MCF 10A (cell line): ENCODE measurements at regions of chr16 and their contacts with region 1.

Region 1: DNA sequence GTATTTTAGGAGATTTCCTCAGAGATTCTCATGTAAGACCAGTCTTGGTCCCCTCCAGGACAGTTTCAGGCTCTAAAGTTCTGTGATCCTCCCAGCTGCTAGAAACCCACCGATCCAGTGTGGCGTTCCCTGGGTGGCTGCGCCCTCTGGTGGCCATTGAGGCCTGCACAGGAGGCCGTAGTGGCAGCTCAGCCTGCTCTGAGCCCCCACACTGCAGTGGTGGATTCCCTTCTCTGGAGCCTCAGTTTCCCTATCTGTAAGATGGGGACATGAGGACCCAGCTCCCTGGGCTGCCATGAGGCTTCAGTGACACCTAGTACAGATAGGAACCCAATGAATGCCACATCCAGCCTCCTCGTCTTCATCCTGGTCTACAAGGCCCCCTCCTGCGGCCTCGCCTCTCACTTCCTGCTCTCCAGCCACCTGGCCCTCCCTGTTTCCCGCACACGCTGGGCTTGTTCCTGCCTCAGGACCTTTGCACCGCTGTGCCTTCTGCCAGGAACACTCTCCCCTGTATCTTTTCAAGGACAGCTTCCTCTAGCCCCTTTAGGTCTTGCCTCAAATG is 16.5 kb downstream of the CCDC102A start:
- DNase-seq: peak; percentile 67
- H3K4me3 Mint-ChIP-seq: no peak overlapping the region
- H3K27ac Mint-ChIP-seq: no peak overlapping the region
- H3K4me1 Mint-ChIP-seq: no peaks in the 10 kb centered on the region
- H3K27me3 Mint-ChIP-seq: no peaks in the 10 kb centered on the region
- CTCF ChIP-seq: peak; percentile 92

Region 2: GRCh38 chr16:57422026-57422944 is 97.6 kb before region 1 on chr16:
- CTCF ChIA-PET with region 1: interaction called, 129 read pairs
- POLR2A ChIA-PET with region 1: no interaction called
- intact Hi-C with region 1: loop called (anchors 1 kb)
- DNase-seq: peak; percentile 69
- H3K4me3 Mint-ChIP-seq: no peak overlapping the region
- H3K27ac Mint-ChIP-seq: no peak overlapping the region
- H3K4me1 Mint-ChIP-seq: peaks cover 21% of the 10 kb centered on the region
- H3K27me3 Mint-ChIP-seq: no peaks in the 10 kb centered on the region
- CTCF ChIP-seq: peak; percentile 51

Region 3: DNA sequence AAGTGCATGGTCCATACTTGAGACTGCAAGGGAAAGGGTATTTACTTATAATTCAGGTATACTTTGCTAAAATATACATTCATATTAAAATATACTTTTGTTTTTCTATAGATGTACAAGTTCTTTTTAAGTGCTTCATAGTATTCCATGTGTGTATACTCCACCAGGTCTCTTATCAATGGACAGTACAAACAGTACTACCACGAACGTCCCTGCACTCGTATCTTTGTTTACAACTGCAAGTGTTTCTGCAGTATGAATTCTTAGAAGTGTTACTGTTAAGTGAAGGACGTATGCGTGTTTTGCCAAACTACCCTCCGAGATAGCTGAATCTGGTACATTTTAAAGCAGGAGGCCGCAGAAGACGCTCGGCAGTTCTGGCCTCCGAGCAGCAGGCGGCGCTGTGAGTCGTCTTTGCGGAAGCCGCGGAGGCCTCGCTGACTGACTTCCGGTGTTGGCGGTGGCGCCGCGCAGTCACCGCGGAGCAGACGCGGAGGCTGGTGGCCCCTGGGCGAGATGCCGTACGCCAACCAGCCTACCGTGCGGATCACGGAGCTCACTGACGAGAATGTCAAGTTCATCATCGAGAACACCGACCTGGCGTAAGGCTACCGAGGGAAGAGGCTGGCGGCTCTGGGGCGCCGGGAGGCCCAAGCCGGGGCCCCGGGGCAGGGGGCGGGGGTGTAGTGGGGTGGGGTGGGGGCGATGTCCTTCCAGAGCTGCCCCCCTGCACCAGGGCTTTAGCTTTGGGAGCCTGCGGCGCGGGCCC is 57.5 kb before region 1 on chr16 and contains the start of gene POLR2C:
- CTCF ChIA-PET with region 1: interaction called, 10 read pairs
- POLR2A ChIA-PET with region 1: interaction called, 3 read pairs
- intact Hi-C with region 1: no loop called
- DNase-seq: peak; percentile 81
- H3K4me3 Mint-ChIP-seq: peak within 1 kb of the TSS; percentile 76
- H3K27ac Mint-ChIP-seq: peak within 1 kb of the TSS; percentile 93
- H3K4me1 Mint-ChIP-seq: peaks cover 7% of the 10 kb centered on the region
- H3K27me3 Mint-ChIP-seq: no peaks in the 10 kb centered on the region
- CTCF ChIP-seq: peak; percentile 98
- total RNA-seq, gene POLR2C: 43.3 and 44.8 TPM in 2 replicates

Region 4: DNA sequence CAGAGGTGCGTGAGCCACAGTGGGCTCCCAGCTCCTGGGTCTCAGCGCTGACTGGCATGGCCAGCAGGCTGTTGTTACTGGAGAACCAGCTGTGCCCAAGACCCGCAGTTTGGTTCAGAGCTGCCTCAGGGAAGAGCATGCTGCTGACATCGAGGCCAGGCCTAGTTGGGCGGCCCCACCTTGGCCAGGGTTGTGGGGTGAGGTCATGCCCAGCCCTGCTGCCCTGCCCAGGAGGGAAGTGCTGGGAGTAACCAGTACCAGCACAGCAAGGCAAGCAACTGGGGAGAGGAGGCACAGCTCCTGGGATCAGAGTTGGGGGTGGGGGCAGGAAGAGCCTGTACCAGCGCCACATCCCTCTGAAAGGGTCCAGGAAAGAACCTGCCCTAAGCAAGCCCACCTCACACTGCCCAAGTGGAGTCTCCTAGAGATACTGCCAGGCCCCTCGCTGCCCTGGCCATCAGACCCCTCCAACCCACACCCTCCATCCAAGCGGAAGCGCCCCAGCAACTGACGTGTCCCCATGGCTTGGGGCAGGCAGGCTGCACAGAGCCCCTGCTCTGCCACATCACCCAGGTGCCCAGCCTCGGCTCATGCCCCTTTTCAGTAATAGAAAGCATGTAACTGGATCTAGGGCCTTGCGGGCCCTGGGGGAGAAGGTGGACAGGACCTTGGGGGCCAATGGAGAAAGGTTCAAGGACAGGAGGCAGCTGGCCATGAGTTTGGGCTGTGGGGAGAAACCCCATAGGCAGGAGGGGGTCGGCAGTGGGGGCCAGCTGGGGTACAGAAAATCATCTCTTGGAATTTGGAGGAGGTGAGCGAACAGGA is 34.6 kb before region 1 on chr16:
- CTCF ChIA-PET with region 1: interaction called, 10 read pairs
- POLR2A ChIA-PET with region 1: no interaction called
- intact Hi-C with region 1: no loop called
- DNase-seq: no peak
- H3K4me3 Mint-ChIP-seq: peak overlapping the region; percentile 86
- H3K27ac Mint-ChIP-seq: peak overlapping the region; percentile 80
- H3K4me1 Mint-ChIP-seq: peaks cover 5% of the 10 kb centered on the region
- H3K27me3 Mint-ChIP-seq: no peaks in the 10 kb centered on the region
- CTCF ChIP-seq: no peak

Region 5: DNA sequence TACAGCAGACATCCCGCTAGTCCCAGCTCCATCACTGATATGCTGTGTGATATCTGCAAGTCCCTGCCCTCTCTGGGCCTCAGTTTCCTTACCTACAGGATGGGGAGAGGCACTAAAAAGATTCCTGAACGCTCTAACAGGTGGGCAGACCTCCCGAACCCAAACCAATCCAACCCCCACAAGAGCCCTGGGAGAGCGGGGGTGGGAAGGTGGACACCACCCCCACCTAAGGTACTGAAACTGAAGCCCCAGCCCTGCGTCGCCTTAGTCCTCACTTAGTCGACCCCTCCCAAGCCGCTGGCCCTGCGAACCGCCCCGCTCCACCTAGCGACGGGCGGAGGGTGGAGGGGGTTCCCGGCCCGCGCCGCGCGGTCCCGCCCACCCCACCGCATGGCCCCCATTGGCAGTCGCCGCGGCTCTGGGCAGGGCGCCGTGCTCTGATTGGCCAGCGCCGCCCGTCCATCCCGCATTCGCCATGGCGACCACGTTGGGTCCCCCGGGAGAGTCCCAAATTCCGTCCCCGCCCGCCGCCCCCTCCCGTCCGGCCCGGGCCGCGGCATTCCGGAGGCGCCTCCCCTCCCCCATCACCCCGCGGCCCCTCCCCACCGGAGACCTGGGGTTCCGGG is 15.9 kb after region 1 on chr16:
- CTCF ChIA-PET with region 1: interaction called, 11 read pairs
- POLR2A ChIA-PET with region 1: no interaction called
- intact Hi-C with region 1: no loop called
- DNase-seq: peak; percentile 85
- H3K4me3 Mint-ChIP-seq: peak overlapping the region; percentile 78
- H3K27ac Mint-ChIP-seq: peak overlapping the region; percentile 87
- H3K4me1 Mint-ChIP-seq: peaks cover 28% of the 10 kb centered on the region
- H3K27me3 Mint-ChIP-seq: peaks cover 19% of the 10 kb centered on the region
- CTCF ChIP-seq: no peak

Region 6: DNA sequence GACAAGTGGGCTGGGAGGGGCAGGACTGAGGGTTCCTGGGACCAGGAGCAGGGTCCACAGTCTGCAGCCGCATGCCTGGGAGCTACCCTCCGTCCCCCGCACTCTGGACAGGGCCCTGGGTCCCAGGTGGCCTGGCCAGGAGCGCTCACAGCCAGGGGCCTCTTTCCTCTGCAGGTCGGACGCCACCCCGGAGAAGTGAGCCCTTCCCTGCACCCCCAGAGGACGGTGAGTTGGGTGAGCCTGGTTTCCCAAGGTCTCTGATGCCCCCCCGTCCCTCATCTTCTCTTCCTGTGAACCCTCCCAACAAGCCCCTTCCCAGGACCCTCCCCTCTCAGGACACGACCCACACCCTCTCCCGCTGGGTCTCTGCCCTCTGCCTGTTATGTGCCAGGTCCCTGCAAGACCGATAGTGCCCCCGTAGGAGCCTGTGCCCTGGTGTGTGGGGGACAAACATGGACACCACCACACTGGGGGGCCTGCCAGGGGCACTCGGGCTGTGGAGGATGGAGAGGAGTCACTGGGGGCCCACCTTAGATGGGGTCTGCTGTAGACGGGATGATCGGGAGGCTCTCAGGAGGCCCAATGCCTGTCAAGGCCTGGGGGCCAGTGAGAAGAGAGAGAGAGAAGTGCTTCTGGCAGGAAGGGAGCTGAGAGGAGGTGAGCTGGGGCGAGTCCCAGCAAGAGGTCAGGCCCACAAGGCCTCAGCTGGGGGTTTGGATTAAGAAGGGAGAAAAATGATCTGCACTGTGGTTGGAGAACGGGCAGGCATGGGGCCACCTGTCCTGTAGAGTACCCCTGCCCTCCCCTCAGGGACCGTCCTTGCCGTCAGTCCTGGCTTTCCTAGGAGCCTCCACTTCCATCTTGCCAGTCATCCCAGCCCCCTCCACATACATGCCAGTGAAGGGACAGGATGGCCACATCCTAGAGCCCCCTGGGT is 234.2 kb after region 1 on chr16:
- CTCF ChIA-PET with region 1: no interaction called
- POLR2A ChIA-PET with region 1: no interaction called
- intact Hi-C with region 1: no loop called
- DNase-seq: no peak
- H3K4me3 Mint-ChIP-seq: no peak overlapping the region
- H3K27ac Mint-ChIP-seq: peak overlapping the region; percentile 87
- H3K4me1 Mint-ChIP-seq: no peaks in the 10 kb centered on the region
- H3K27me3 Mint-ChIP-seq: no peaks in the 10 kb centered on the region
- CTCF ChIP-seq: no peak